ENCODE measurements at regions of chr22 and their contacts with region 1.

Region 1: DNA sequence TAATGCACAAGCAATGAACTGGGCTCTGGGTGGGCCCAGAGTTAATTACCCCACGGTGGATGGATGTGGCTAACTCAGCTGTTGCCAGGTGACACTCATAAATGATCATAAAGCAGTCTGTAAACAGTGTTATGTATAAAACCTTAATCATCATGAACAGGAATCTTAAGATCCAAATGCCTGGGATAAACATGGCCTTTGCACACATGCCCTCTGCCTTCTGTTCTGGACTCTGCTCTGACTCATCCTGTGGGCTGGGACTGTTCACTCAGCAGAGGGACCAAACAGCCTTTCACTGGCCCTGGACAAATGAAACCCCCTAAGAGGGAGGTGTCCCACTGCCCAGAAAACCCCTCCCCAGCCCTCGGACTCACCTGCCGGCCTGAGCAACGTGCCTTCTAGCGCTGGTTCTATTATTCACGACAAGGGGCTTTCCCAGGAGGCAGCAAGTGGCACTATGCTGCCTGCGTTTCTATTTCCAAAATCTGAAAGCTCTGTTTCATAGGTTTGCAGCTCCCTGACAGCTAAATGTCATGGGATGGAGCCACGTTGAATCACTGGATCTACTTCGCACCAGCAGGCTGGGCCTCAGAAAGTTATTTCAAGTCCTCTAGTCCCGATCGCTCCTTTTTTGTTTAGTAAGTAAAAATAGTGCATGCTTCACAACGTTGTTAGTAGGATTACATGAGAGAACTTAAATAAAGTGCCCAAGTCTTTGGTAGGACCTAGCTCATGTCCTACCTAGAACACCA is 53.0 kb downstream of the LARGE1 start:
- DNase-seq: no peak

Region 2: GRCh38 chr22:33781411-33781810 is 85.9 kb before region 1 on chr22:
- intact Hi-C with region 1: loop called (anchors 5 kb)
- DNase-seq: no peak

Region 3: GRCh38 chr22:33829546-33830280 is 37.6 kb before region 1 on chr22:
- intact Hi-C with region 1: loop called (anchors 5 kb)
- DNase-seq: no peak

Measured in cardiac septum (tissue), 1 donor.